ENCODE measurements at regions of chr2 and their contacts with region 1.

Region 1: DNA sequence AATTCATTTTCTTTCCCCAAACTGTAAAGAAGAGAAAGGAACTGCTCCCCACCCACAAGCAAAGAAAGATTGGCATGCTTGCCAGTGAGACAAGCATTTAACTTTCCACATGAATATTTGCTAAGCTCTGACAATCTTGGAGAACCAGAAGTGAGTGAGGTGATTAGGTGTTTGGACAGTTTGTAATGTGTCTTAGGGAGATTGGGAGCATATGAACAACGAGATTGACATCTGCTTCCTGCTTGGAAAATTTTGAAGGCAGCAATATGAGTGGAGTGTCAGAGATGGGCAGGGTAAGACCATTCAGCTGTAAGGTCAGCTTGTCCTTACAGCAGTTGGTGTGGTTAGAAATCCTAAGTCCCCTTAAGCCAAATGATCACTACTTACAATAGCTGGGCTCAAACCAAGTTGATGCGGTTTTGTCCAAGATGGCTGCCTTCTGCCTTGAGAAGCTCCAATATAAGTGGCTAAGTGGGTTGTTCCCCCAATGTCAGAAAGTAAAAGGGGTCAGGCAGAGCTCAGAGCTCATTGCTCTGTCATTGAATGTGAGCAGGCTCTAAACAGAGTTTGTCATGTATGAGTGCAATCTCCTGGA is 36.0 kb upstream of the GALNT5 start:
- DNase-seq: no peak
- H3K4me3 ChIP-seq: no peak overlapping the region
- H3K27ac ChIP-seq: no peak overlapping the region
- H3K4me1 ChIP-seq: no peaks in the 10 kb centered on the region
- H3K27me3 ChIP-seq: no peaks in the 10 kb centered on the region
- CTCF ChIP-seq: no peak
- EP300 ChIP-seq: no peak
- POLR2A ChIP-seq: no peak

Region 2: GRCh38 chr2:155377266-155377680 is 1844.2 kb before region 1 on chr2:
- in situ Hi-C with region 1: loop called in 1 of 4 experiments (anchors 25 kb)
- intact Hi-C with region 1: no loop called
- DNase-seq: no peak
- H3K4me3 ChIP-seq: no peak overlapping the region
- H3K27ac ChIP-seq: no peak overlapping the region
- H3K4me1 ChIP-seq: no peaks in the 10 kb centered on the region
- H3K27me3 ChIP-seq: no peaks in the 10 kb centered on the region
- CTCF ChIP-seq: peak in 4 of 5 experiments; percentile 10 to 29 (median 14)
- EP300 ChIP-seq: no peak
- POLR2A ChIP-seq: no peak

Region 3: DNA sequence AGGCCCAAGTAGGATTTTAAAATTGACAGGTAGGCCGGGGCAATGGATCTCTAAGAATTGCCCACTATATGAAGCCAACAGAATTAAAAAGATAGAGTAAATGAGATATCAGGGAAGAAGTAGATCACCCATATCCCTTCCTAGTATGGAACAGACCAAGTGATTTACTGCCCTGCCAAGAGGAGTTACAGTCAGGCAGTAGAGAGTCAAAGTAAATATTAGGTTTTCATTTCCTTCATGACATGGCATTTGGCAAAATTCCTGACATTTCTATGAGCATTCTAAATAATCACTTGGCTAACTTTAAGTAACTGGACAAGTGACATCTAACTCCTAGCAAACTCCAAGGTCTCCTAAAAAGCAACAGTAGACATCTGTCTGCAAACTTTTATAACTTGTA is 69.5 kb after region 1 on chr2:
- in situ Hi-C with region 1: no loop called
- intact Hi-C with region 1: loop called (anchors 2 kb)
- DNase-seq: no peak
- H3K4me3 ChIP-seq: no peak overlapping the region
- H3K27ac ChIP-seq: no peak overlapping the region
- H3K4me1 ChIP-seq: peaks cover 0 to 7% (median 3%) of the 10 kb centered on the region in 4 donors
- H3K27me3 ChIP-seq: no peaks in the 10 kb centered on the region
- CTCF ChIP-seq: no peak
- EP300 ChIP-seq: no peak
- POLR2A ChIP-seq: no peak